Motor neuron (in vitro differentiated cells): ENCODE measurements at regions of chr1 and their contacts with region 1.

Region 1: DNA sequence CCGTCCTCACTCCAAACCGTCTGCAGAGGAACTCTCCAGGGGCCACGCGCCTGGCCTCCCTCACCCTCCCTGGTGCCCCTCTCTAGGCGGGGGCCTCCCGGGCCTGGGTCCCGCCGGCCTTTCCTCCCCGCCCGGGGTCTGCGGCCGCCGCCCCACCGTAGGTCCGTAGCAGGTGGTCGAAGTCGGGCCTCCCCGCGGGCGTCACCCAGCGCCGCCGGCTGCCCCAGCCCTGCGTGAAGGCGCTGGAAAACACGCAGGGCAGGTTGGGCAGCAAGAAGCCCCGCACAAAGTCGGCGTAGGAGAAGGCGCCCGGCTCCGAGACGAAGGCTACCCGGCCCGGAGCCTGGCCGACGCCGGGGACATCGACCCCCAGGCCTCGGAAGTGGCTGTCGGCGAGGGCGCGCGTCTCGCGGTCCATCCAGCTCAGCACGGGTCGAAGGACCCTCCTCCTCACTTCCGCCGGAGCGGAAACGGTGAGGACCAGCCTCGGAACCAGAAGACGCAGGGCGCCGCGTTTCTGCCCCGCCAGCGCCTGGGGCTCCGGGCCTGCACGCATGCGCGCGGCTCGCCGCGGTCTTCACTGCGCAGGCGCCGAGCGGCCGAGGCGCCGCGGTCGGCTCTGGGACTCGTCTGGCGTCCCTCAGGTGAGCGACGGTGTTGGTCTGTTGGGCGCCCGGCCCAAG is at the starts of genes JMJD4 and SNAP47:
- ATAC-seq: peak; percentile 91 to 97 (median 92)
- H3K4me3 ChIP-seq: peak within 1 kb of the TSS; percentile 74 to 95 (median 81)
- H3K27ac ChIP-seq: peak within 1 kb of the TSS; percentile 80 to 91
- H3K4me1 ChIP-seq: peaks cover 16 to 21% of the 10 kb centered on the region in 2 donors
- total RNA-seq, gene JMJD4: 16.8 to 27.5 (median 21.1) TPM
- total RNA-seq, gene SNAP47: 26.6 to 56.0 (median 40.9) TPM

Region 2: DNA sequence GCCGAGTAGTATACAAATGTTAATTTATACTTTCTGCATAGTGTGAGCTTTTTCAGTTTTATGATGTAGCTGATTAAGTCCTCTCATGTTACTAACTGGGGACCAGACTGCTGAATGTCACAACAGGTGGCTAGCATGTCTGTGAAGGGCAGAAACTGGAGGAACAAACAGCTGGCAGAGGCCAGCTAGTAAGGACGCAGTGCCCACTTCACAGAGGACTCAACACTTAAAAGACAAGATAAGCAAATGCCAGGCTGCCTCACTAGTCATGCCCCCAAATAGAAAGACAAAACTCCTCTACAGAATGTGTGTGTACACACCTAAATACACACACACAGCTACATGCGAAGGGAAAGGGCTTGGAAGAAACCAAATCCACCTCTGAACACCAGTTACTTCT is 245.4 kb before region 1 on chr1:
- in situ Hi-C with region 1: loop called in 1 of 9 experiments (anchors 25 kb)
- ATAC-seq: no peak
- H3K4me3 ChIP-seq: no peak overlapping the region
- H3K27ac ChIP-seq: no peak overlapping the region
- H3K4me1 ChIP-seq: no peaks in the 10 kb centered on the region

Region 3: GRCh38 chr1:228751360-228752113 is 1016.5 kb after region 1 on chr1:
- in situ Hi-C with region 1: no loop called
- ATAC-seq: no peak
- H3K4me3 ChIP-seq: no peak overlapping the region
- H3K27ac ChIP-seq: no peak overlapping the region
- H3K4me1 ChIP-seq: peaks cover 9 to 19% of the 10 kb centered on the region in 2 donors